ENCODE measurements at regions of chr11 and their contacts with region 1.

Region 1: GRCh38 chr11:126716456-126717083 is 284.0 kb downstream of the KIRREL3 start:
- DNase-seq: peak; percentile 75
- H3K4me3 ChIP-seq: no peak overlapping the region; a peak in 1 of 4 replicates
- H3K27ac ChIP-seq: no peak overlapping the region
- H3K4me1 ChIP-seq: no peaks in the 10 kb centered on the region; a peak in 1 of 4 replicates
- H3K27me3 ChIP-seq: no peaks in the 10 kb centered on the region
- CTCF ChIP-seq: peak; percentile 75
- EP300 ChIP-seq: no peak
- RAD21 ChIP-seq: peak; percentile 85

Region 2: GRCh38 chr11:126607374-126607773 is 109.2 kb before region 1 on chr11:
- CTCF ChIA-PET with region 1: interaction called, 21 read pairs
- POLR2A ChIA-PET with region 1: no interaction called
- DNase-seq: peak; percentile 83
- H3K4me3 ChIP-seq: no peak overlapping the region
- H3K27ac ChIP-seq: no peak overlapping the region
- H3K4me1 ChIP-seq: peaks cover 0 to 30% of the 10 kb centered on the region in 2 experiments; a peak in 2 of 4 replicates
- H3K27me3 ChIP-seq: no peaks in the 10 kb centered on the region
- CTCF ChIP-seq: peak; percentile 83
- EP300 ChIP-seq: no peak
- RAD21 ChIP-seq: peak; percentile 91

Region 3: GRCh38 chr11:126698576-126698975 is 18.0 kb before region 1 on chr11:
- CTCF ChIA-PET with region 1: interaction called, 12 read pairs
- POLR2A ChIA-PET with region 1: no interaction called
- DNase-seq: no peak
- H3K4me3 ChIP-seq: no peak overlapping the region
- H3K27ac ChIP-seq: no peak overlapping the region
- H3K4me1 ChIP-seq: peaks cover 0 to 13% of the 10 kb centered on the region in 2 experiments; a peak in 1 of 4 replicates
- H3K27me3 ChIP-seq: no peaks in the 10 kb centered on the region
- CTCF ChIP-seq: no peak
- EP300 ChIP-seq: no peak
- RAD21 ChIP-seq: no peak

Region 4: DNA sequence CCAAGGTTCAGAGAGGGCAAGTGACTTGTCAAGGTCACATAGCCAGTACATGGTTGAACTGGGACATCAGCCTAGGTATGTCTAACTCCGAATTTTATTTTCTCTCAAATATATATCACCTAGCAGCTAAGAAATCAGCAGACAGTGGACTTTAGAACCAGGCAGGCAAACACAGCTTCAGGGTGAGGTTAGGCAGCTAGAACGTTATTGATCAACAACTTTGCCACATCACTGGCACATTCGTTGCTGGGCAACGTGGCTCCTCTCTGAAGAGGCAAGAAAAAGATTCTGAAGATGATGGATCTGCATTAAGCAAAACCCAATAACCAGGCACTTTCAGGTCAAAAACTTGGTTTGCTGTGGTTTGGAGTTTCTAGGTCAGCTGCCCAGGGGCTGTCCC is 26.0 kb after region 1 on chr11:
- CTCF ChIA-PET with region 1: interaction called, 18 read pairs
- POLR2A ChIA-PET with region 1: no interaction called
- DNase-seq: no peak
- H3K4me3 ChIP-seq: no peak overlapping the region
- H3K27ac ChIP-seq: no peak overlapping the region
- H3K4me1 ChIP-seq: no peaks in the 10 kb centered on the region
- H3K27me3 ChIP-seq: no peaks in the 10 kb centered on the region
- CTCF ChIP-seq: no peak
- EP300 ChIP-seq: no peak
- RAD21 ChIP-seq: no peak

Region 5: DNA sequence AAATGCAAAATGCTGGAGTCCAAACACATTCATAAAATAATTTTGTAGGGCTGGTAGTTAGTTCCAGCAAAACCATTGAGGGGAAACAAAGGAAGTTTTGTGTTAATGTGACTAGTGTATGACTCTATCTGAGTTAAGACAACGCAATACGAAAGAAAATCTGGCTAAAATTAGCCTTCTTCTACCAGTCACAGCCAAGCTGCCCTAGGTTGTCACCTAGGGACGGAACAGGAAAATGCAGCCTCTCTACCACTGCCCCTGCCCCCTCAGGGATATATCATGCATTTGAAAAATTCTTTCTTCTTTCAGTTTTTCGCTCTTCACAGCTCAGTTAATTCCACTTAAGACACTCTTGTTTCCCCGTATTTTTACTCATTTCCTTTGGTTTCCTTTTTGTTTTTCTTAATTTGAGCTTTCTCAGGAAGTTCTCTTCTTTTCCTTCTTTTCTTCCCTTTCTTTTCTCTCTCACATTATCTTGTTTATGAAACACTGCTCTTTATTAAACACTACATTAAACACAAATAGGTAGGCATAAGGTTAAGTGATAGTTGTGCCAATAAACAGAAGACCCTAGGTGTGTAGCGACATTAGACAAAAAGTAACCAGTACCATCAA is 253.4 kb after region 1 on chr11:
- CTCF ChIA-PET with region 1: interaction called, 29 read pairs
- POLR2A ChIA-PET with region 1: no interaction called
- DNase-seq: peak; percentile 40
- H3K4me3 ChIP-seq: no peak overlapping the region; a peak in 1 of 4 replicates
- H3K27ac ChIP-seq: peak overlapping the region in 1 of 2 experiments; percentile 59; a peak in 2 of 4 replicates
- H3K4me1 ChIP-seq: no peaks in the 10 kb centered on the region
- H3K27me3 ChIP-seq: no peaks in the 10 kb centered on the region
- CTCF ChIP-seq: peak; percentile 83
- EP300 ChIP-seq: no peak
- RAD21 ChIP-seq: peak; percentile 71